Ascending aorta (tissue), 2 donors: ENCODE measurements at regions of chr12 and their contacts with region 1.

Region 1: GRCh38 chr12:110109037-110109836 is 14.9 kb upstream of the IFT81 start:
- DNase-seq: peak; percentile 77 to 97
- H3K4me3 ChIP-seq: peak overlapping the region; percentile 21 to 27
- H3K27ac ChIP-seq: peak overlapping the region; percentile 91 to 92
- H3K4me1 ChIP-seq: peaks cover 17 to 61% of the 10 kb centered on the region in 2 donors
- H3K27me3 ChIP-seq: no peaks in the 10 kb centered on the region
- CTCF ChIP-seq: peak in 1 of 3 experiments; percentile 68

Region 2: GRCh38 chr12:110124184-110124995 is 15.2 kb after region 1 on chr12 and contains the start of gene IFT81:
- intact Hi-C with region 1: loop called (anchors 1 kb)
- DNase-seq: peak; percentile 71 to 97
- H3K4me3 ChIP-seq: peak within 1 kb of the TSS; percentile 92 to 93
- H3K27ac ChIP-seq: peak within 1 kb of the TSS; percentile 93
- H3K4me1 ChIP-seq: peaks cover 0 to 7% of the 10 kb centered on the region in 2 donors
- H3K27me3 ChIP-seq: no peaks in the 10 kb centered on the region
- CTCF ChIP-seq: peak in 1 of 3 experiments; percentile 16
- total RNA-seq, gene IFT81: 12.0 TPM

Region 3: DNA sequence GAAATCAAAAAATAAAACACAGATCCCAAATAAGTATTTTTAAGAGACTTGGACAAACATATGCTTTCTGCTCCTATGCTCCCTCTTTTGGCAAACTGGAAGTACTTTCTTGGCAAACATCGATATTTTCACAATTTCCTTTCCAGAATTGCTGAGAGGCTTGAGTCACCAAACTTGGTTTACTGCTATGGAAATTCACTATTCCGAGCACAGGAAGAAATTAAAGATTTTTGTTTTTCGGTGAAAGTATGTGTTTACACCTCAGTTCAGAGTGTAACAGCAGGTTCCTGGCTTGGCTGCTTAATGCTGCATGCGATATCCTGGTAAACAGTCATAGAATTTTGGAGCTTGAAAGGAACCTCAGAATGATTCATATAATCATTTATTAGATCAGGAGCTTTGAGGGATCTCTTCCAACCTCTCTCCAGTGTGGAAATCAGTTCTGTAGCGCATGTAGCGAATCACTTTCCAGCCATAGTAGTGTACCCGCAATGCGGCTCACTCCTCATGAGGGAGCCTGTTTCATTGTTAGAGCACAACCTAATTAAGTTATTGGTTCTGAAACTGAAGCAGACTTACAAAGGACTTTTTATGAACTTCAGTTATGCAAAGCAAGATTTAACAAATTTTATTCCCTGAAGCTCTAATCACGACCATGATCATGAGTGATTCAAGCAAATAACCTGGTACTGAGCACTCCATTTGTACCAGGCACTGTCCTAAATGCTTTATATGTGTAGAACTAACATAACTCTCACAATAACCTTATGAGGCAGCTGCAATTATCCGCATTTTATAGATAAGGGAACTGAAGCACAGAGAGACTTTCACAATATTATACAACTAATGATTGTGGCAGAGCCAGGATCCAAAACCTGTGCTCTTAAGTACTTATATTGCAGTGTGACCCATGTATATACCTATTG is 115.4 kb after region 1 on chr12:
- intact Hi-C with region 1: loop called (anchors 2 kb)
- DNase-seq: peak in 1 of 2 donors; percentile 69
- H3K4me3 ChIP-seq: peak overlapping the region; percentile 23 to 53
- H3K27ac ChIP-seq: peak overlapping the region; percentile 70 to 73
- H3K4me1 ChIP-seq: peaks cover 5 to 37% of the 10 kb centered on the region in 2 donors
- H3K27me3 ChIP-seq: no peaks in the 10 kb centered on the region
- CTCF ChIP-seq: peak; percentile 54 to 70 (median 61)

Region 4: DNA sequence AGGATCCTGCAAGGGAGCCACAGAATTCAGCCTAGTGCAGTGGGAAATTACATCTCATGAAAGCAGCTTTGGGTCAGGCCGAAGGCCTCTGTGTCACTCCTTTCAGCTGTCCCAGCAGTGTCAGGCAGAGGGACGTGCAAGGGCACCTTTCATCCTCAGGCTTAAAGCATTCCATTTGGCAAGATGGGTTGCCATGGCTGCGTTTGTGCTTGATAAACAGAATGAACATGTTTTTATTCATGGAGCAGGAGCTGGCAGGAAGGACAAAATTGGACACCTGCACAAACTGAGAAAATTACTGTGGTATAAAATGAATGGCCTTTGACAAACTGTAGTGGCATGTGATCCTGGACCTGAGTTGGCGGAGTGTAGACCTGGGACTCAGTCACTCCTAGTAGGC is 1606.0 kb after region 1 on chr12:
- intact Hi-C with region 1: no loop called
- DNase-seq: no peak
- H3K4me3 ChIP-seq: no peak overlapping the region
- H3K27ac ChIP-seq: no peak overlapping the region
- H3K4me1 ChIP-seq: no peaks in the 10 kb centered on the region
- H3K27me3 ChIP-seq: no peaks in the 10 kb centered on the region
- CTCF ChIP-seq: no peak

Region 5: DNA sequence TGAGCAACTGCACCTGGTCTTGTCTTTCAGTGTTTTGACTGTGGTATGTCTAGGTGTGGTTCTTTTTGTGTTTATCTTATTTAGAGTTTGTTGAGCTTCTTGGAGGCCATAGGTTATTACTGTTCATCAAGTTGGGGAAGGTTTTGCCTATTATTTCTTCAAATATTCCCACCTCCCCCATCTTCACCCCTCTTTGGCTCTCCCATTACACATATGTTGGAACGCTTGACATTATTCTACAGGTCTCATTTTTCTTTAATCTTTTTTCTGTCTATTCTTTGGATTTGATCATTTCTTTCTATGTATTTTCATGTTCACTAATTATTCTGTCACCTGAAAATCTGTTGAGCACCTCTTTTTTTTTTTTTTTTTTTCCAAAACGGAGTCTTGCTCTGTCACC is 1748.9 kb after region 1 on chr12:
- intact Hi-C with region 1: no loop called
- DNase-seq: no peak
- H3K4me3 ChIP-seq: no peak overlapping the region
- H3K27ac ChIP-seq: no peak overlapping the region
- H3K4me1 ChIP-seq: peaks cover 0 to 5% of the 10 kb centered on the region in 2 donors
- H3K27me3 ChIP-seq: no peaks in the 10 kb centered on the region
- CTCF ChIP-seq: no peak